Right ventricle myocardium superior (tissue), 1 donor: ENCODE measurements at regions of chr18 and their contacts with region 1.

Region 1: GRCh38 chr18:13264091-13265007 is 45.8 kb downstream of the LDLRAD4 start:
- DNase-seq: peak; percentile 88
- ATAC-seq: peak; percentile 76

Region 2: DNA sequence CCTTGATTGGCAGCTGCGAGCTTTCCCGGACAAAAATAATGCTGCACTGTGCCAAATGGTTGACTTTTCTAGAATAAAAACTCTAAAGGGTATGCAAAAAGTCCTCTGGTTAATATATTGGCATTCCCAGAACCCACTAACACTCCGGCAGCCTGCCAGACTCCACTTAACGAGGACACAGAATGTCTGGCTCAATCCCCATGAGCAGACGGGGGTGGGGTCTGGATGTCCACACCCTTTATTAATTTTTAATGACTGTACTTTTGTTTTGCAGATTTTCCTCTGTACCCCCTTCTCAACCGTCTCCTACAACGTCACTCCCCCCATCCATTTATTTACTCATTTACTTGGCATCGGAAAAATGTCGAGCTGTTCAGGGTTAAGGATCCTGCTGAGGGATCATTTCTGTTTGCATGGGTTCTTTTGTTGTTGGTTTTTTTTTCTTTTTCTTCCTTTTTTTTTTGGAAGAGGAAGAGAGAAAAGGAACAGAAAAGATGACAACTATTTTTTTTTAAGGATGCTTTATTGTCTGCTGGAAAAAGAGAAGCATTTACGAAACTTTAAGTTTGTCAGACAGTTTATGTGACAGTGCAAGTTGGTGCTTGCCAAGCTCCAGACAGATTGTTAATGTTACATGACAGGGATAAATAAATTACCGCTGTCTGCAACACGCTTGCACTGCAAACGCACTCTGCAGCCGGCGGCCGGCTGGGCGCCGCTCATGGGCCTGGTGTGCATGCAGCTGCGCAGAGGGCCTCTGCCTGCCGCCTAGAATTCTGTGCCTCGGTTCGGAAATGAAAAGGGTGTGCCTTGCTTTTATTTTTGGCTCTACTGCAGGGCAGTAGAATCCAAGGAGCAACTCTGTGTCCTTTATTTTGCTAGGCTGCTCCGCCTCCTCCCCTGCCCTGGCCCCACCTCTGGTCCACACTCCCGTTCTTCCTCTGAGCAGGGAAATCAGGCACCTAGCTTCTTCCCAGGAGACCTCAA is 42.2 kb before region 1 on chr18:
- intact Hi-C with region 1: loop called (anchors 2 kb)
- DNase-seq: peak; percentile 89
- ATAC-seq: peak; percentile 47

Region 3: DNA sequence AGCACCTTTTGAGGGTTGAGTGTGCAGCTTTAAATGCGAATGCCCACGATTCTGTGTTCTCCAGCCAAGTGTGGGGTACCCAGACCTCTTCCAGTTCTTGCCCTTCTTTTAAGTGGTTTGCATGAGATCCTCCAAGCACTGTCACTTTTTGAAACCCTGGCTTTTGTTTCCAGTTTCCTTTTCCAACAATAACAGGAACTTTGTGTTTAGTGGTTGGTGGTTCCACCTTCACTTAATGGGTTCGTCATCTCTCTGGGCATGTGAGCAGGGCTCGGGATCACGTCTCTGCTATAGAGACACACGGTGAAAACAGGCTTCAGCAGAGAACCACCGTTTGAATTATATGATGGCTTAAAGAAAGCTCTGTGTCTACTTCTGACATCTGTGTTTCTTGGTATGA is 151.9 kb after region 1 on chr18:
- intact Hi-C with region 1: no loop called
- DNase-seq: no peak
- ATAC-seq: peak; percentile 38